ENCODE measurements at regions of chr16 and their contacts with region 1.

Region 1: GRCh38 chr16:27242868-27243590 is 25.5 kb downstream of the NSMCE1 start:
- DNase-seq: peak in 1 of 2 donors; percentile 72
- ATAC-seq: peak; percentile 84
- H3K4me3 ChIP-seq: peak overlapping the region in 1 of 2 donors; percentile 22
- H3K27ac ChIP-seq: peak overlapping the region; percentile 32 to 78
- H3K4me1 ChIP-seq: peaks cover 7 to 10% of the 10 kb centered on the region in 2 donors
- H3K27me3 ChIP-seq: no peaks in the 10 kb centered on the region

Region 2: GRCh38 chr16:27313422-27314160 is 70.6 kb after region 1 on chr16 and contains the start of gene IL4R:
- intact Hi-C with region 1: loop called (anchors 5 kb)
- DNase-seq: peak; percentile 92 to 93
- ATAC-seq: peak; percentile 56
- H3K4me3 ChIP-seq: peak within 1 kb of the TSS; percentile 33 to 65
- H3K27ac ChIP-seq: peak within 1 kb of the TSS; percentile 36 to 61
- H3K4me1 ChIP-seq: no peaks in the 10 kb centered on the region
- H3K27me3 ChIP-seq: no peaks in the 10 kb centered on the region
- total RNA-seq, gene IL4R: 91.7 to 138 TPM

Region 3: DNA sequence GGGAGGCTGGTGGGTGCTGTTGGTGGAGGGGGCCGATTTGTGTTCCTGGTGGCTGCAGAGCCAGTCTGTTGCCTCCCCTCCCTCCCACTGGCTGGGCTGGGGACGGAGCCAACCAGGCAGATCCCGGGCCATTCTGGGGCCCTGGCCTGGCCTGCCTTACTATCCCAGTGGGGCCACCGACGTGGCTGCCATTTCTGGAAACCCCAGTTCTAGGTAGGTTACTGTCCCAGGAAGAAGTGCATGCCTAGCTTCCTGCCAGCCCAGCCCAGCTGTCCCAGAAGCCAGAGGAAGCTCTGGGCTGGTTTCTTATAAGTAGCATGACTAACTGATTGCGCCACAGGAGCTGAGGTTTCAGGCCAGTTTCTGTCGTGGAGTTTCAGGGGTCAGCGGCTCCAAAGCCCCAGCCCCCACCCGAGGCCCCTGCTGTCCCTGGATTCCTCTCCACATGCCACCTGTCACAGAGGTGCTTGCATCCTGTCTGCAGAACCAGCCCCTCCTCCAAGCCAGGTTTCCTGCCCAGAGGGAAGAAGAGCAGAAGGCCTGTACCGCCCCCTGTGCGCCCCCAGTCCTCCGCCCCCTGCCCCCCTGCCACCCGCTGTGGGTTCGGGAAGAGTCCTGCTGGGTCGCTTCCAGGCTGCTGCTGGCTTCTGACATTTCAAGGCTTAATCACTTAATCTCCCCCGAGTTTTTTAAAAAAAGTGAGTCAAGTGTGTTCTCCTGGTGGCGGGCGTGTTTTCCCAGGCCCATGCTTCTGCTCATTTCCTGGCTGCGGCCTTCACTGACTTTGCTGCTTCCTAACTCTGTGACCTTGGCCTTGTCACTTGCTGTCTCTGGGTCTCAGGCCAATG is 83.9 kb after region 1 on chr16:
- intact Hi-C with region 1: loop called (anchors 5 to 10 kb)
- DNase-seq: peak; percentile 90 to 92
- ATAC-seq: peak; percentile 80
- H3K4me3 ChIP-seq: no peak overlapping the region
- H3K27ac ChIP-seq: peak overlapping the region in 1 of 2 donors; percentile 76
- H3K4me1 ChIP-seq: peaks cover 0 to 2% of the 10 kb centered on the region in 2 donors
- H3K27me3 ChIP-seq: no peaks in the 10 kb centered on the region